Activated CD4-positive, alpha-beta T cell treated with anti-CD3 and anti-CD28 coated beads, Interleukin-2, amount 10 ng/mL, durations not matched to agents 24 days and 14 days (primary cell): ENCODE measurements at regions of chr18 and their contacts with region 1.

Region 1: DNA sequence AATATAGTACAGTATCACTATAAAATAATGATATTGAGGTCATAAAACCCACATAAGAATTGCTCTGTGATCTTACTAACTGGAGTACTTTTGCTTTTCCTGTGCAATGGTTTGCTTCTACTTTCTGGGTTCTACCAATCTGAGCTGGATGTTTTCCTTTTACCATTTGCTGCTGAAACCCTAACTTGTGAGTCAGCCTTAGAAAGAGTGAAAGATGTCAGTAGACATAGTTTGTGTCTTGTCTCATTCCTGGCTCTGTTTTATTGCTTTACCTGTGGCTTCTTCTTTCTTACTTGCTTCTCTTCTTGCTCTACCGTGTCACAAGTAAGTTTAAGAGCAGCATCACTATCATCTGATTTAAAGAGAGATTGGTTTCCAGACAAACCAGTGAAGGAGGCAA is 61.0 kb downstream of the MBD2 start:
- DNase-seq: peak; percentile 49
- H3K4me3 Mint-ChIP-seq: no peak overlapping the region
- H3K27ac Mint-ChIP-seq: peak overlapping the region; percentile 86
- H3K4me1 Mint-ChIP-seq: peaks cover 22% of the 10 kb centered on the region
- H3K27me3 Mint-ChIP-seq: no peaks in the 10 kb centered on the region

Region 2: DNA sequence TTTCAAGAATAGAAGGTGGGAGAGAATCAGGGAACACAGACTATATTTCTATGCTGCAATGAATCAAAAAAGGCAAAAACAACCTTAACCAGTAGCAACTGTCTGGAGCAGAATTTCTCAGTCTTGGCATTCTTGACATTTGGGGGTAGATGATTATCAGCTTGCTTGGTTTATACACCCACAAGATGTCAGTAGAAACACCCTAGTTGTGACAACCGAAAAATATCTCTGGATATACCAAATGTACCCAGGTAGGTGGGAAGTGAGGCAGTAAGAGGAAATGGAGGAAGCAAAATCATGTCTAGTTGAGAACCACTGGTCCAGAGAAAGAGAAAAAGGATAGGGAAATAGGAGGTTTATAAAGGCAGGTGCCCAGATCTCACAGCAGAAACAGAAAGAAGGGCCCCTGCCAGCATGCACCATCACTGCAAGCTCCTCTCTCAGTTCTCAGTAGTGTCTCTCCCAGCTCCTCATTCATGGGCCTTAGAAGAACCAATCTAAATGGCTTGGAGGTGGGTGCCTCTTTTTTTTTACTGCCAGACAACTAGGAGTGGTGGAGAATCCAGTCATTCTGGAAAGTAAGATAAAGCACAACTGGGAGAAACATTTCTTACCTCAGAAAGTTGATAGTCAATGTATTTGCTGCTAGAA is 10.7 kb after region 1 on chr18:
- intact Hi-C with region 1: loop called (anchors 1 kb)
- DNase-seq: peak; percentile 63
- H3K4me3 Mint-ChIP-seq: peak overlapping the region; percentile 39
- H3K27ac Mint-ChIP-seq: peak overlapping the region; percentile 90
- H3K4me1 Mint-ChIP-seq: peaks cover 61% of the 10 kb centered on the region
- H3K27me3 Mint-ChIP-seq: no peaks in the 10 kb centered on the region